ENCODE measurements at regions of chr17 and their contacts with region 1.

Region 1: DNA sequence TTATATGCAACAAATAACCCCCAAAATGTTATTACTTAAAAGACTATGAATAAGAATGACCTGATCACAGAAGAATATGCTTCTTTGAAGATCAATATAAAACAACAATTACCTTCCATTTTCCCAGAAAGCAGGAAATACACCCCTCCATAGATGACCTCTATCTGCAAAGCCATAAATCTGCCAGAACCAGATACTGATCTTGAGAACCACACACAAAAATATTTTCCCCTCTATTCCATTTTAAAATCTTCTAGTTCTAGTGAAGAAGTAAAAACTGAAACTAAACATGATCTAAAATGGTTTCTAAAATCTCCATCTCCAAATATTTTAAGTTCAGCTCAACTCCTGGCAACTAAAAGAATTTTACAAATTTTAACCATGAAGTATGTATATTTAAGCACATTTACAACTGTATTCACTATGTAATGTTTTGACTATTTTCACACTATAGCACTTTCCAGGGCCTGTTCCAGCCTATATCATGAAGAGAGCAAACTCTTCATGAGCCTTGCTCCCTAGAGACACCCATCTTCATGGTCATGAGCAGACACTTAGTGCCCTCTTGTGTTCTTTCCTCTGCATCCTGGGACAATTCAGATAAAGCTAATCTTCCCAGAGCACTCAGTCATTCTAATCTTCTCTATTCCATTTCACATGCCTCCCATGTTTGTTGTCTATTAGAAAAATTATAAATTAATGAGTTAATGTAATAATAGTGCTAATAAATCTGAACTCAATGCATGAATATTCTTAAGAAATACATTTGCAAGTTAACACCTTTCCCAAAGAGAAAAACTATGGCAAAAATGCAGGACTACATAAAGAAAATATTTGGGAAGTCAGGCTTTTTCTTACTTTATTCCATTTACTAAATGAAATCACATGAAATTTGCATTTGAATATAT is 87.0 kb downstream of the HELZ start:
- DNase-seq: no peak
- ATAC-seq: peak; percentile 61 to 71

Region 2: DNA sequence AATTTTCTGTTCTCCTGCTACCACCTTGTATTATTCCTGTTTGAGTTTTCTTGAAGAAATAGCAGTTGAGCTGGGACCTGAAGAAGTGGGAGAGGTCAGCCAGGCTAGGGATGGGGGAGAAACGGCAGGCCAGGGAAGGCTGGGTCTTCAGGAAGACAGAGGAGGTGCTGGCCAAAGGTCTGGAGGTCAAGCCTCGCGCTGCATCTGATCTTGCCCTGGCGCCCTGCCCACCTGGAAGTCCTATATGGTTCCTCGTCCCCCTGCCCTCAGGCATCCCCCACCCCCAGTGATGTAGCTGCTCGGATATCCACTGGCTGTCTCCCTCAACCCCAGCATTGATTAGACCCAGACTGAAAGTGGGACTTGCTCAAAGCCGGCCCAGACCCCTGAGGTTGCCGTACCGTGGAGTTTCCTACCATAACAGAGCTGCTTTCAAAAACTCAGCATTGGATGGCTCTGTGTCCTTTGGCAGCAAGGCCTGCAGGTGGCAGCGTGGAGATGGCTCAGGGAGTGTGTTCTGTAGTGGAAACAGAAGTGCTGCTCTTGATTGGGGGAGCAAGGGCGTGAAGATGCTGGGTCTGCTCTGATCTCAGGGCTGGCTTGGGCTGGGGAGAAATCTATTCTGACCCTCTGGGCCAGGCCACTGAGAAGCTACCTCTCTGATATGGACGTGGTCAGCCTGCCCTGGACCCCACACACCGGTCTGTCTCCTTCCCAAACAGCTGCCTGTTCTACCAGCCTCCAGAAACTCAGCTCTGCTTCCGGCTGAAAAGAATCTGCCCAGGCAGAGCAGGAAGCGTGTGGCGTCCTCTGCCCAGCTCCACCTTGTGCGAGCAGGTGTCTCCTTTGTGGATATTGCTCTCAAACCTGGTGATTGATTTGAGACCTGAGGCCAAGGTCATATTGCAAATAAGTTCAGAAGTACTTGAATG is 430.1 kb before region 1 on chr17:
- intact Hi-C with region 1: loop called in 1 of 2 experiments (anchors 10 kb)
- DNase-seq: peak; percentile 58
- ATAC-seq: peak; percentile 66 to 80

Region 3: GRCh38 chr17:66873962-66874361 is 284.0 kb before region 1 on chr17:
- intact Hi-C with region 1: no loop called
- DNase-seq: no peak
- ATAC-seq: no peak

Region 4: GRCh38 chr17:67200720-67201301 is 42.8 kb after region 1 on chr17:
- intact Hi-C with region 1: loop called in 1 of 2 experiments (anchors 5 kb)
- DNase-seq: no peak
- ATAC-seq: no peak